GM12878 (cell line): ENCODE measurements at regions of chr5 and their contacts with region 1.

Region 1: GRCh38 chr5:153496835-153497234 is 6.4 kb downstream of the GRIA1 start:
- DNase-seq: no peak
- ATAC-seq: peak; percentile 57; the same call in 2 of the 3 replicates
- H3K4me3 ChIP-seq: no peak overlapping the region
- H3K27ac ChIP-seq: no peak overlapping the region
- H3K4me1 ChIP-seq: no peaks in the 10 kb centered on the region
- H3K27me3 ChIP-seq: no peaks in the 10 kb centered on the region; a peak in 1 of 4 replicates
- CTCF ChIP-seq: peak; percentile 52 to 68 (median 55)
- EP300 ChIP-seq: no peak
- POLR2A ChIP-seq: no peak
- RAD21 ChIP-seq: peak; percentile 88

Region 2: GRCh38 chr5:153267506-153267905 is 229.3 kb before region 1 on chr5:
- CTCF ChIA-PET with region 1: no interaction called
- POLR2A ChIA-PET with region 1: no interaction called
- RAD21 ChIA-PET with region 1: no interaction called
- SMC1A ChIA-PET with region 1: no interaction called
- in situ Hi-C with region 1: no loop called
- intact Hi-C with region 1: no loop called
- DNase-seq: no peak
- ATAC-seq: no peak
- H3K4me3 ChIP-seq: no peak overlapping the region
- H3K27ac ChIP-seq: no peak overlapping the region
- H3K4me1 ChIP-seq: no peaks in the 10 kb centered on the region
- H3K27me3 ChIP-seq: no peaks in the 10 kb centered on the region
- CTCF ChIP-seq: no peak
- EP300 ChIP-seq: no peak
- POLR2A ChIP-seq: no peak
- RAD21 ChIP-seq: no peak

Region 3: DNA sequence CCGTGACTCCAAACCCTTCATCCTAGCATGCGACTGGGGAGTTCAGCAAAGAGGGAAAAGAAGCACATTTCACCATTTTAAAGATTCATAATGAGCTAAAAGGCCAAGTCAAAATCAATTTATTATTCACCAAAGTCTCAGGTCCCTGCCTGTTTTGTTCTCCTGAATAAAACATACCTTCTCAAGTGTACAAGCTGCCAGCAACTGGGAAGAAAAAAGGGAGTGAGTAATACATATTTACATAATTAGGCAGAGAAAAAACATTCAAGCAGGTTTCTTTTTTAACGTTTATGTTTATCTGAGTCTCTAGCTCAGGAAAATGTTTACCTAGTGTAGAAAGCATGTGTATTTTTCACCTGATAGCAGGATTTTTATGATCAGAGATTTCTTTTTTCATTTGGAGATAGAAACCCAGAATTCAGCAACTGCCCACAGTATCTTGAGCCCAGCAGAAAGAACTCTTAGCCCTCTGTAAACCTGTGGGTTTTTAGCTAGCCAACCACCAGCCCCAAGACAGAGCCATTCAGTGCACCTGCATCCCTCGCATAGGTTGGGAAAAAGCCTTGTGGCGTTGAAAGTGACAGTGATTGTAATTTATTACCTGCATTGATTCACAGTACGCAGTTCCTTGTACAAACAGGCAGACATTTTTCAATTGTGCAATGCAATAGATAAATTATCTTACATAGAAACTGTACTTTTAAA is 124.3 kb before region 1 on chr5:
- CTCF ChIA-PET with region 1: no interaction called
- POLR2A ChIA-PET with region 1: no interaction called
- RAD21 ChIA-PET with region 1: no interaction called
- SMC1A ChIA-PET with region 1: no interaction called
- in situ Hi-C with region 1: no loop called
- intact Hi-C with region 1: no loop called
- DNase-seq: no peak
- ATAC-seq: no peak
- H3K4me3 ChIP-seq: no peak overlapping the region
- H3K27ac ChIP-seq: no peak overlapping the region
- H3K4me1 ChIP-seq: no peaks in the 10 kb centered on the region
- H3K27me3 ChIP-seq: no peaks in the 10 kb centered on the region
- CTCF ChIP-seq: no peak
- EP300 ChIP-seq: no peak
- POLR2A ChIP-seq: no peak
- RAD21 ChIP-seq: no peak

Region 4: DNA sequence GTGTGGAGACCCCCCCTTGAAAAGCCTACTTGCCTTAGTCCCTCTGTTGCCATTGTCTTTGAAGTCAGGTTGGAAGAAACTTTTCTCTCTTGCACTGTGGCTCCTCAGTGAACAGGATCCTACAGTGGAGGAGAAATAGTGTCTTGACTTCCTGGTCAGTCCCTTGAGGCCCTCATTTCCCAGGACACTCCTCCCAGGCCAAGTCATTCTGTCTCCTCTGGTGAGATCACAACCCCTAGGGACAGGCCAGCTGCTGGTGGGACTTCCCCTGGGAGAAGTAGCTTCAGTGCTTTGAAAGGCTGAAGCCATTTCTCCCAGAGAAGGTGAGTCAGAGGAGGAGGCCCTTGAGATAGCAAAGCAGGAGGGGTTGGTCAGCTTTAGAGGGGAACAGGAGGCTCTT is 16.4 kb before region 1 on chr5:
- CTCF ChIA-PET with region 1: interaction called, 6 read pairs
- POLR2A ChIA-PET with region 1: no interaction called
- RAD21 ChIA-PET with region 1: interaction called, 3 read pairs
- SMC1A ChIA-PET with region 1: interaction called, 23 read pairs
- in situ Hi-C with region 1: no loop called
- intact Hi-C with region 1: no loop called
- DNase-seq: peak; percentile 58
- ATAC-seq: peak; percentile 84
- H3K4me3 ChIP-seq: no peak overlapping the region
- H3K27ac ChIP-seq: no peak overlapping the region
- H3K4me1 ChIP-seq: no peaks in the 10 kb centered on the region; the same call in 1 of the 2 replicates
- H3K27me3 ChIP-seq: no peaks in the 10 kb centered on the region
- CTCF ChIP-seq: no peak
- EP300 ChIP-seq: no peak
- POLR2A ChIP-seq: no peak
- RAD21 ChIP-seq: 0 out of 2 replicates have a peak, but pooled peaks have one; percentile 1